CD14-positive monocyte (primary cell): ENCODE measurements at regions of chr7 and their contacts with region 1.

Region 1: DNA sequence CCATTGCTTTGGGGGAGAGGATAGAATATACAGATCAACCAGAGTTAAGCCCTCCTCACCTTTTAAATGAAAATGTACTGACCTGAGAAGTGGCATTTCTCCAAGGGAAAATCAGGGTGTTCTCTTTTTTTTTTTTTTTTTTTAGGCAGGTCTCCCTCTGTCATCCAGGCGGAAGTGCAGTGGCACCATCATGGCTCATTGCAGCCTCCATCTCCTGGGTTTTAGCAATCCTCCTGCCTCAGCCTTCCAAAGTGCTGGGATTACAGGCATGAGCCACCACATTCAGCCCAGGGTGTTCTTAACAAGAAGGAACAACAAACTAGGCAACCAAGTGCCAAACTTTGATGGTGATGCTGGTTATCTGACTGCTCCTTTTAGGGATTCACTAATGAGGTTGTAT is 111.0 kb downstream of the SVOPL start:
- DNase-seq: no peak
- H3K4me3 ChIP-seq: no peak overlapping the region
- H3K4me3 Mint-ChIP-seq: no peak overlapping the region
- H3K27ac ChIP-seq: no peak overlapping the region
- H3K27ac Mint-ChIP-seq: no peak overlapping the region
- H3K4me1 ChIP-seq: no peaks in the 10 kb centered on the region
- H3K4me1 Mint-ChIP-seq: no peaks in the 10 kb centered on the region
- H3K27me3 ChIP-seq: no peaks in the 10 kb centered on the region
- H3K27me3 Mint-ChIP-seq: peaks cover 0 to 2% (median 0%) of the 10 kb centered on the region in 3 donors
- CTCF ChIP-seq: no peak

Region 2: GRCh38 chr7:137846827-137847567 is 743.2 kb before region 1 on chr7 and contains the start of gene DGKI:
- intact Hi-C with region 1: no loop called
- DNase-seq: no peak
- H3K4me3 ChIP-seq: no peak within 1 kb of the TSS
- H3K4me3 Mint-ChIP-seq: peak within 1 kb of the TSS in 1 of 2 donors; percentile 74
- H3K27ac ChIP-seq: no peak within 1 kb of the TSS
- H3K27ac Mint-ChIP-seq: no peak within 1 kb of the TSS
- H3K4me1 ChIP-seq: peaks cover 0 to 2% of the 10 kb centered on the region in 2 donors
- H3K4me1 Mint-ChIP-seq: peaks cover 5% of the 10 kb centered on the region
- H3K27me3 ChIP-seq: peaks cover 56 to 75% of the 10 kb centered on the region in 2 donors
- H3K27me3 Mint-ChIP-seq: peaks cover 66 to 73% (median 68%) of the 10 kb centered on the region in 3 donors
- CTCF ChIP-seq: no peak
- polyA plus RNA-seq, gene DGKI: not detected

Region 3: DNA sequence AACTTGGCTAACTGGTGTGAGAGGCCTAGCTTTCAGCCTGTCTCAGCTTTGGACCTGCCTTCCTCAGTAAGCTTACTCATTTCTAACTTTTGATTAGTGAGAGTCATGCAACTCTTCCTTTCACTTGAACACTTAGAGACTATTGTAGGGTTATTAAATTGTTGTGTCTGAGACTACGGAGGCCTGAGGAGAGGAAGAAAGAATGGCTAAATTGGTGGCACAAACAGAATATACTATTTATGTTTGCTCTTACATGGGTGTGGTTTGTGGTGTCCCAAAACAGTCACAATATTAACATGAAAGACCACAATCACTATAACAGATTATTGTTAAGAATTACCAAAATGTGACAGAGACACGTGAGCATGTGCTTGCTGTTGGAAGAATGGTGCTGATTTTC is 48.0 kb before region 1 on chr7:
- intact Hi-C with region 1: loop called in 1 of 2 experiments (anchors 2 kb)
- DNase-seq: no peak
- H3K4me3 ChIP-seq: no peak overlapping the region
- H3K4me3 Mint-ChIP-seq: no peak overlapping the region
- H3K27ac ChIP-seq: no peak overlapping the region
- H3K27ac Mint-ChIP-seq: no peak overlapping the region
- H3K4me1 ChIP-seq: peaks cover 0 to 3% of the 10 kb centered on the region in 2 donors
- H3K4me1 Mint-ChIP-seq: no peaks in the 10 kb centered on the region
- H3K27me3 ChIP-seq: no peaks in the 10 kb centered on the region
- H3K27me3 Mint-ChIP-seq: no peaks in the 10 kb centered on the region
- CTCF ChIP-seq: no peak

Region 4: GRCh38 chr7:138565451-138566114 is 24.6 kb before region 1 on chr7:
- intact Hi-C with region 1: no loop called
- DNase-seq: peak; percentile 53 to 75 (median 63)
- H3K4me3 ChIP-seq: peak overlapping the region in 1 of 3 experiments; percentile 75
- H3K4me3 Mint-ChIP-seq: no peak overlapping the region
- H3K27ac ChIP-seq: peak overlapping the region; percentile 65 to 92
- H3K27ac Mint-ChIP-seq: peak overlapping the region; percentile 78 to 91 (median 87)
- H3K4me1 ChIP-seq: peaks cover 5 to 48% of the 10 kb centered on the region in 2 donors
- H3K4me1 Mint-ChIP-seq: peaks cover 10% of the 10 kb centered on the region
- H3K27me3 ChIP-seq: no peaks in the 10 kb centered on the region
- H3K27me3 Mint-ChIP-seq: peaks cover 0 to 3% (median 0%) of the 10 kb centered on the region in 3 donors
- CTCF ChIP-seq: no peak